ENCODE measurements at regions of chr3 and their contacts with region 1.

Region 1: GRCh38 chr3:47022641-47023071 is 43.2 kb downstream of the NBEAL2 start:
- DNase-seq: no peak
- ATAC-seq: no peak
- H3K4me3 ChIP-seq: no peak overlapping the region
- H3K4me3 Mint-ChIP-seq: no peak overlapping the region
- H3K27ac ChIP-seq: no peak overlapping the region
- H3K27ac Mint-ChIP-seq: peak overlapping the region in 1 of 2 donors; percentile 69
- H3K4me1 ChIP-seq: peaks cover 0 to 5% of the 10 kb centered on the region in 2 experiments
- H3K4me1 Mint-ChIP-seq: peaks cover 42 to 57% (median 55%) of the 10 kb centered on the region in 3 donors
- H3K27me3 ChIP-seq: no peaks in the 10 kb centered on the region
- H3K27me3 Mint-ChIP-seq: no peaks in the 10 kb centered on the region

Region 2: DNA sequence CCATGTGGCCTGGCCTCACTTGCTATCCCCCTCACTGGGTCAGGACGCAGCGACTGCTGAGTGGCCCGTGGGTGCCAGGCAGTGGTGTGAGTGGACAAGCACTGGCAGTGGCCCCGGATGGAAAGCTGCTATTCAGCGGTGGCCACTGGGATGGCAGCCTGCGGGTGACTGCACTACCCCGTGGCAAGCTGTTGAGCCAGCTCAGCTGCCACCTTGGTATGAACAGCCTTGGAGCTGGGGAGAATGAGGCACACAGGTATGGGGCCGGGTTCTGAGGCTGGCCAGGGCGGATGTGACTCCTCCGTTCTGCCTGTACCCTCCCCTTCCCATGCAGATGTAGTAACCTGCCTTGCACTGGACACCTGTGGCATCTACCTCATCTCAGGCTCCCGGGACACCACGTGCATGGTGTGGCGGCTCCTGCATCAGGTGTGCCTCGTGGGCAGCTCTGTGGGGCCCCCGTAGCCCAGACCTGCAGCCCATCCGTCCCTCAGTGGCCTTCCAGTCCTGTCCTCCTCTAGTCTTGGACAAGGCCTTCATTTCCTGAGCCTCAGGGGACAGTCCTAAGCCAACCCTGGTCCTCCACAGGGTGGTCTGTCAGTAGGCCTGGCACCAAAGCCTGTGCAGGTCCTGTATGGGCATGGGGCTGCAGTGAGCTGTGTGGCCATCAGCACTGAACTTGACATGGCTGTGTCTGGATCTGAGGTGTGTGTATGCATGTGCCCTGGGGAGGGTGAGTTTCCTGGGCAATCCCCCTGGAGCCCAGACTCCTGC is 15.0 kb before region 1 on chr3:
- CTCF ChIA-PET with region 1: no interaction called
- POLR2A ChIA-PET with region 1: interaction called, 3 to 13 read pairs
- DNase-seq: peak in 1 of 35 experiments; percentile 13
- ATAC-seq: no peak
- H3K4me3 ChIP-seq: no peak overlapping the region
- H3K4me3 Mint-ChIP-seq: peak overlapping the region in 1 of 3 donors; percentile 38
- H3K27ac ChIP-seq: no peak overlapping the region
- H3K27ac Mint-ChIP-seq: peak overlapping the region in 1 of 2 donors; percentile 55
- H3K4me1 ChIP-seq: peaks cover 0 to 22% of the 10 kb centered on the region in 2 experiments
- H3K4me1 Mint-ChIP-seq: peaks cover 0 to 17% (median 6%) of the 10 kb centered on the region in 3 donors
- H3K27me3 ChIP-seq: no peaks in the 10 kb centered on the region
- H3K27me3 Mint-ChIP-seq: no peaks in the 10 kb centered on the region